Activated CD8-positive, alpha-beta T cell treated with anti-CD3 and anti-CD28 coated beads for 36 hours (primary cell): ENCODE measurements at regions of chr14 and their contacts with region 1.

Region 1: GRCh38 chr14:75577729-75578101 is 705 bp upstream of the FLVCR2 start:
- DNase-seq: peak; percentile 88
- ATAC-seq: peak; percentile 93
- H3K4me3 Mint-ChIP-seq: peak overlapping the region; percentile 77
- H3K27ac Mint-ChIP-seq: peak overlapping the region; percentile 59
- H3K4me1 Mint-ChIP-seq: peaks cover 20% of the 10 kb centered on the region
- H3K27me3 Mint-ChIP-seq: peaks cover 3% of the 10 kb centered on the region
- CTCF ChIP-seq: peak; percentile 66

Region 2: GRCh38 chr14:74493343-74494261 is 1084.1 kb before region 1 on chr14 and contains the start of gene ISCA2:
- CTCF ChIA-PET with region 1: no interaction called
- POLR2A ChIA-PET with region 1: no interaction called
- intact Hi-C with region 1: no loop called
- DNase-seq: peak; percentile 100
- ATAC-seq: peak; percentile 96
- H3K4me3 Mint-ChIP-seq: no peak within 1 kb of the TSS
- H3K27ac Mint-ChIP-seq: peak within 1 kb of the TSS; percentile 89
- H3K4me1 Mint-ChIP-seq: peaks cover 24% of the 10 kb centered on the region
- H3K27me3 Mint-ChIP-seq: no peaks in the 10 kb centered on the region
- CTCF ChIP-seq: no peak
- total RNA-seq, gene ISCA2: 29.1 to 31.7 TPM

Region 3: DNA sequence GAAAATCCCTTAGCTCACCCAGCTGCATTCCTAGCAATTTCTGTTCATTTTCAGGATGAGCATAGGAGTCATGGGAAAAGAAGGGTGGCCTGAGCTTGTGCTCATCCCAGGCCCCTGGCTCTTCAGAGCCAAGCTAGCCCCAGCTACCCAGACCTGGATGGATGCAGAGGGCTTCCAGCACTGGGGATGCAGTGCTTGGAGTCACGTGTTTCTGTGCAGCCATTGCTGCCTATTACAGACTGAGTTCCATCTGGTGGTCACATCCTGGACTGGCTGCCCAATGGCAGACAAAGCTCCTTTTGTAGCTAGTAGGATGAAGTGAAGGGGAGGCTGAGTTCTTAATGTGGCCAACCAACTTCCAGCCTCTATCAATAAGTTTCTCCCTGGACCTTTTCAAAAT is 204.1 kb before region 1 on chr14:
- CTCF ChIA-PET with region 1: no interaction called
- POLR2A ChIA-PET with region 1: no interaction called
- intact Hi-C with region 1: no loop called
- DNase-seq: no peak
- ATAC-seq: no peak
- H3K4me3 Mint-ChIP-seq: no peak overlapping the region
- H3K27ac Mint-ChIP-seq: no peak overlapping the region
- H3K4me1 Mint-ChIP-seq: no peaks in the 10 kb centered on the region
- H3K27me3 Mint-ChIP-seq: peaks cover 4% of the 10 kb centered on the region
- CTCF ChIP-seq: no peak

Region 4: GRCh38 chr14:75440733-75441477 is 136.8 kb before region 1 on chr14:
- CTCF ChIA-PET with region 1: no interaction called
- POLR2A ChIA-PET with region 1: no interaction called
- intact Hi-C with region 1: no loop called
- DNase-seq: no peak
- ATAC-seq: no peak
- H3K4me3 Mint-ChIP-seq: no peak overlapping the region
- H3K27ac Mint-ChIP-seq: no peak overlapping the region
- H3K4me1 Mint-ChIP-seq: peaks cover 3% of the 10 kb centered on the region
- H3K27me3 Mint-ChIP-seq: no peaks in the 10 kb centered on the region
- CTCF ChIP-seq: no peak

Region 5: GRCh38 chr14:75527449-75528163 is 50.1 kb before region 1 on chr14:
- CTCF ChIA-PET with region 1: interaction called, 11 read pairs
- POLR2A ChIA-PET with region 1: no interaction called
- intact Hi-C with region 1: no loop called
- DNase-seq: no peak
- ATAC-seq: no peak
- H3K4me3 Mint-ChIP-seq: no peak overlapping the region
- H3K27ac Mint-ChIP-seq: peak overlapping the region; percentile 9
- H3K4me1 Mint-ChIP-seq: peaks cover 68% of the 10 kb centered on the region
- H3K27me3 Mint-ChIP-seq: no peaks in the 10 kb centered on the region
- CTCF ChIP-seq: no peak

Region 6: GRCh38 chr14:75566321-75566720 is 11.4 kb before region 1 on chr14:
- CTCF ChIA-PET with region 1: interaction called, 38 read pairs
- POLR2A ChIA-PET with region 1: interaction called, 6 read pairs
- intact Hi-C with region 1: no loop called
- DNase-seq: peak; percentile 96
- ATAC-seq: peak; percentile 82
- H3K4me3 Mint-ChIP-seq: peak overlapping the region; percentile 30
- H3K27ac Mint-ChIP-seq: peak overlapping the region; percentile 88
- H3K4me1 Mint-ChIP-seq: peaks cover 76% of the 10 kb centered on the region
- H3K27me3 Mint-ChIP-seq: no peaks in the 10 kb centered on the region
- CTCF ChIP-seq: no peak

Region 7: GRCh38 chr14:75619548-75619947 is 41.8 kb after region 1 on chr14:
- CTCF ChIA-PET with region 1: interaction called, 14 read pairs
- POLR2A ChIA-PET with region 1: no interaction called
- intact Hi-C with region 1: no loop called
- DNase-seq: no peak
- ATAC-seq: no peak
- H3K4me3 Mint-ChIP-seq: no peak overlapping the region
- H3K27ac Mint-ChIP-seq: no peak overlapping the region
- H3K4me1 Mint-ChIP-seq: no peaks in the 10 kb centered on the region
- H3K27me3 Mint-ChIP-seq: no peaks in the 10 kb centered on the region
- CTCF ChIP-seq: no peak

Region 8: DNA sequence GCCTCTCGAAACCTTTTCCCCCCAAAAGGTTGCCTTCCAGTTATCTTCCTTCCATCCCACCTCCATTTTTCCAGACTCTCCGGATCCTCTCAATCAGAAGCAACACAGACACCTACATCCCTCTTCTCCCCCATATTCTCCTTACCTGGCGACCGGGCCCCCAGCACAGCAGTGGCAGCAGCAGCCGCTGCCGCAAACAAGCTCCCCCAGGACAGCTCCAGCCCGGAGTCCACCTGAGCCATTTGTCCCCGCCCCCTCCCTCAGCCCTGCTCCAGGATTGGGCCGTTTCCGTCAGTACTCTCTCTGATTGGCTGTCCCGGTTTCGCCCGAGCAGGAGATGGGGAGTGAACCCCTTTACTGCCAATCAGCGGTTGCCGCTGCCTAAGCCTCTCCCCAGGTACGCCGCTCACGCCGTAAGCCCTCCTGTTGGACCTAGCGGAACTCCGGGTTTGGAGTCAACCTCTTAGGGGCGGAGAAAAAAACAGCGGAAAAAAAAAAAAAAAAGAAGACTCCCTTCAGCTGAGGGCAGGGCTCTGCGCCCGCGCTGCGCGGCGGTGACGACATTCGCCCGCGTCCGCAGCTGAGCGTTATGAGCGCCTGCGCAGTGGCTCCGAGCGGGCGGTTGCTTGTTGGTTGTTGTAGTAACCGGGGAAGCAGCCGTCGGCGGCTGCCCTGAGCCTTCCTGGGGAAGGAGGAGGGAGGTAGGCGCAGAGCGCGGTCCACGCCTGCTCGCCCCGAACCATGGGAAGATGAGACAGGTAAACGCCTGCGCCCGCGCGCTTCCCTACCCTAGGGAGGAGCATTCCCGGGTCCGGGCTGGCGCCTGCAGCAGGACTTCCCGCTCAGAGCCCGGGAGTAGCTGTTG is 83.1 kb after region 1 on chr14 and contains the starts of genes ERG28 and TTLL5:
- CTCF ChIA-PET with region 1: interaction called, 281 read pairs
- POLR2A ChIA-PET with region 1: no interaction called
- intact Hi-C with region 1: no loop called
- DNase-seq: peak; percentile 97
- ATAC-seq: peak; percentile 97
- H3K4me3 Mint-ChIP-seq: peak within 1 kb of the TSS; percentile 86
- H3K27ac Mint-ChIP-seq: peak within 1 kb of the TSS; percentile 91
- H3K4me1 Mint-ChIP-seq: peaks cover 17% of the 10 kb centered on the region
- H3K27me3 Mint-ChIP-seq: no peaks in the 10 kb centered on the region
- CTCF ChIP-seq: no peak
- total RNA-seq, gene ERG28: 13.4 to 14.9 TPM
- total RNA-seq, gene TTLL5: 23.6 to 27.2 TPM

Region 9: DNA sequence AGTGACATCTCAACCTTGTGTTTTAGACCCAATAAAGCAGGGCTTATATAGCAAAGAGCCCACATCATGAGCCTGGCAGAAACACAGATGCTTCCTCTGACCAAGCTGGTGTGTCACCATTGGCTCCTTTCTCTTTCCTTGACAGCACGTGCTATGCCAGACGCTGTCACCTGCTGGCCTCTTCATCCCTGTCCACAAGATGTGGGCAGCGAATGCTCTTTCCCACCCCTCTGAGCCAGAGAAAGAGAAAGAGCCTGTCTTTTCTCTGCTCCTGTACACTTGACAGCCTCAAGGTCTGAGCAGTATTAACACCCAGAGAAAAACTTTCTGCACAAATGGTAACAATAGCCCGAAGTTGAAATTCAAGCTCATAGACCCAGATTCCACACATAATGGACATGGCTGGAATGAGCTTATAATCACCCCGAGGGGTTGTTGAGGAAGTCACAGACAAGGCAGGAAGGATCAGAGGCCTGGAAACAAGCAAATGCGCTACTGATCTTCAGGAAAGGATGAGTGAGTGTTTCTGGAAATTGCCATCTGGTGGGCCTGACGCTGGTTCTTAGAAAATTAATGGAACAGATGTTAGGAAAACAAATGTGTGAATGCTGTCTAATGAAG is 395.2 kb after region 1 on chr14:
- CTCF ChIA-PET with region 1: no interaction called
- POLR2A ChIA-PET with region 1: no interaction called
- intact Hi-C with region 1: no loop called
- DNase-seq: no peak
- ATAC-seq: no peak
- H3K4me3 Mint-ChIP-seq: no peak overlapping the region
- H3K27ac Mint-ChIP-seq: no peak overlapping the region
- H3K4me1 Mint-ChIP-seq: peaks cover under 1% of the 10 kb centered on the region
- H3K27me3 Mint-ChIP-seq: no peaks in the 10 kb centered on the region
- CTCF ChIP-seq: no peak